ENCODE measurements at regions of chr10 and their contacts with region 1.

Region 1: GRCh38 chr10:104337974-104338735 is at the start of gene ITPRIP:
- DNase-seq: peak; percentile 62 to 91 (median 82)
- H3K4me3 ChIP-seq: peak within 1 kb of the TSS; percentile 59
- H3K4me3 Mint-ChIP-seq: peak within 1 kb of the TSS; percentile 91 to 100 (median 98)
- H3K27ac ChIP-seq: peak within 1 kb of the TSS; percentile 89
- H3K27ac Mint-ChIP-seq: peak within 1 kb of the TSS; percentile 89 to 100 (median 99)
- H3K4me1 ChIP-seq: peaks cover 47% of the 10 kb centered on the region
- H3K4me1 Mint-ChIP-seq: peaks cover 46 to 59% (median 53%) of the 10 kb centered on the region in 3 donors
- H3K27me3 ChIP-seq: no peaks in the 10 kb centered on the region
- H3K27me3 Mint-ChIP-seq: peaks cover 3 to 4% of the 10 kb centered on the region in 2 donors
- total RNA-seq, gene ITPRIP: 12.8 to 13.1 TPM

Region 2: DNA sequence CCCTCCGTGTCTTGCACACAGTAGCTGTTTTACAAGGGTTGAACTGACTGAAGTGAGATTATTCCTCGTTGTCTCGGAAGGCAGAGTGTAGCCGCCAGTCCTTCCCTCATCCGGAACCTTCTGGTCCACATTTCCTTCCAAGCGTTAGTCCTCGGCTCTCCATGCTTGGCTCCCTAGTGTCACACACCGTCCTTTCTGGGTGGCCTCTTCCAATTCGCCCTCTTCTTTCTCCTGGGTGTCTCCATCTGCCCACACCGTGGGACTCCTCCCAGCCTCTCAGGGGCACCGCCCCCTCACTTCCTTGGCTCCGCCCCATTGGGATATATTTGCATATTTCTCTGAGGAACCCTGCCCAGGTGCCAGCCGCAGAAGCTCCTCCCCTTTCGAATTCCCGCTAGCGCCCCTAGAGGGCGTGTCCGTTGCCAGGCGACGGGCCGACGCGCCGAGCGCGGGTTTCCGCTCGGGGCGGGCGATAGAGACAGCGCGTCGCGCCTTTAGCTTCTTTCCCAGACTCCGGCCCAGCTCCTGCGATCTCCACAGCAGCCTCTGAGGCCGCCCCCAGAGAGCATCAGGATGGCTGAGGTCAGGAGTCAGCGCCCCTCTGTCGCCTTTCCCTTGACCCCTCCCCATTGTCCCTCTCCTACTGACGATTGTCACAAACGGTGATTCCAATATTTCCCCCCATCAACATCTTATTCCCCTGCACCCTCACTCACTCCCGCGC is 15.3 kb after region 1 on chr10 and contains the start of gene CFAP58:
- CTCF ChIA-PET with region 1: interaction called, 54 read pairs
- POLR2A ChIA-PET with region 1: interaction called, 8 read pairs
- DNase-seq: peak; percentile 87 to 93 (median 88)
- H3K4me3 ChIP-seq: peak within 1 kb of the TSS; percentile 67
- H3K4me3 Mint-ChIP-seq: peak within 1 kb of the TSS in 2 of 7 donors; percentile 75 to 81
- H3K27ac ChIP-seq: no peak within 1 kb of the TSS
- H3K27ac Mint-ChIP-seq: peak within 1 kb of the TSS in 5 of 8 donors; percentile 13 to 87 (median 84)
- H3K4me1 ChIP-seq: peaks cover 20% of the 10 kb centered on the region
- H3K4me1 Mint-ChIP-seq: peaks cover 0 to 20% (median 0%) of the 10 kb centered on the region in 3 donors
- H3K27me3 ChIP-seq: no peaks in the 10 kb centered on the region
- H3K27me3 Mint-ChIP-seq: no peaks in the 10 kb centered on the region
- total RNA-seq, gene CFAP58: 0.07 TPM in 1 of 2 experiments, not detected in the other

Region 3: GRCh38 chr10:104515678-104516222 is 177.6 kb after region 1 on chr10:
- CTCF ChIA-PET with region 1: no interaction called
- POLR2A ChIA-PET with region 1: no interaction called
- DNase-seq: no peak
- H3K4me3 ChIP-seq: no peak overlapping the region
- H3K4me3 Mint-ChIP-seq: no peak overlapping the region
- H3K27ac ChIP-seq: no peak overlapping the region
- H3K27ac Mint-ChIP-seq: no peak overlapping the region
- H3K4me1 ChIP-seq: no peaks in the 10 kb centered on the region
- H3K4me1 Mint-ChIP-seq: no peaks in the 10 kb centered on the region
- H3K27me3 ChIP-seq: no peaks in the 10 kb centered on the region
- H3K27me3 Mint-ChIP-seq: peaks cover 10 to 31% of the 10 kb centered on the region in 2 donors